Endothelial cell of umbilical vein (primary cell): ENCODE measurements at regions of chr17 and their contacts with region 1.

Region 1: GRCh38 chr17:48878918-48879898 is 13.4 kb upstream of the ATP5MC1 start:
- DNase-seq: peak; percentile 76
- H3K4me3 ChIP-seq: no peak overlapping the region
- H3K27ac ChIP-seq: no peak overlapping the region
- H3K4me1 ChIP-seq: no peaks in the 10 kb centered on the region
- H3K27me3 ChIP-seq: no peaks in the 10 kb centered on the region
- CTCF ChIP-seq: peak; percentile 87 to 89
- POLR2A ChIP-seq: no peak

Region 2: DNA sequence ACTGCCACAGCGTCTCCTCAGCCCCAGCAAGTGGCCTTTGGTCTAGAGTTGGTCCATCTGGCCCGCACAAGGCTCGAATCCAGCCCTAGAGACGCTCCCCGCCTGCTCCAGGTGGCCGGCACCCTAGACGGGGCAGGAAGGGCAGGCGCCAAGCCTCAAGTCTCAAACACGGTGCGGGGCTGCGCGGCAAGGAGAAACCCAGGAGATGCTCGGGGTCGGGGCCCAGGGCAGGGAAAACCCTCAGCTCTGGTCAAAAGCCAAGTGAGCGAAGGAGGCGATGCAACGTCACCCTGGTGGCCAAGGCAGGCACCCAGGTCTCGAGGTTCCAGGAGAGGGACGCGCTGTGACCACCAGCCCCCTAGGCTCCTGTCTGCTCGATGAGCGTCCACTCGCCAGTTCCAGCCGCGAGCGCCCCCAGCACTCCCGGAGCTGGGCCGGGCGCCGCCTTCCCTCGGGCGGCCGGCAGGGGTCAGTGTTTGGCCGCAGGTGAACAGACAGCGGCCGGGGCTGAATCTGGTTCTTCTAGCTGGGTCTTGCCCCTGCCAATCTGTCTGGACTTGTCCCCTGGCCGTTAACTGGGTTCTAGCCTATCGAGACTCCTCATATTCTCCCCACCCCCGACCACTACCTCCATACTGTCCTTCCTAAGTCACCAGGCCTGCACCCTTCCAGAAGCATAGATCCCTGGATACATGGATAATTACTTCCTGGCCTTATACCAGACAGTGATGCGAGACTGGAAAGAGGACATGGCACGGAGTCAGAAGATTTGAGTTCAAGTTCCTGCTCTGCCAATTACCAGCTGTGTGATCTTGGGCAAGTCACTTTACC is 200.9 kb before region 1 on chr17:
- CTCF ChIA-PET with region 1: interaction called, 182 read pairs
- POLR2A ChIA-PET with region 1: no interaction called
- dilution Hi-C with region 1: no loop called
- intact Hi-C with region 1: loop called (anchors 1 kb)
- DNase-seq: peak; percentile 53
- H3K4me3 ChIP-seq: no peak overlapping the region
- H3K27ac ChIP-seq: no peak overlapping the region
- H3K4me1 ChIP-seq: no peaks in the 10 kb centered on the region
- H3K27me3 ChIP-seq: peaks cover 13 to 19% of the 10 kb centered on the region in 2 experiments
- CTCF ChIP-seq: peak; percentile 95 to 100
- POLR2A ChIP-seq: no peak

Region 3: DNA sequence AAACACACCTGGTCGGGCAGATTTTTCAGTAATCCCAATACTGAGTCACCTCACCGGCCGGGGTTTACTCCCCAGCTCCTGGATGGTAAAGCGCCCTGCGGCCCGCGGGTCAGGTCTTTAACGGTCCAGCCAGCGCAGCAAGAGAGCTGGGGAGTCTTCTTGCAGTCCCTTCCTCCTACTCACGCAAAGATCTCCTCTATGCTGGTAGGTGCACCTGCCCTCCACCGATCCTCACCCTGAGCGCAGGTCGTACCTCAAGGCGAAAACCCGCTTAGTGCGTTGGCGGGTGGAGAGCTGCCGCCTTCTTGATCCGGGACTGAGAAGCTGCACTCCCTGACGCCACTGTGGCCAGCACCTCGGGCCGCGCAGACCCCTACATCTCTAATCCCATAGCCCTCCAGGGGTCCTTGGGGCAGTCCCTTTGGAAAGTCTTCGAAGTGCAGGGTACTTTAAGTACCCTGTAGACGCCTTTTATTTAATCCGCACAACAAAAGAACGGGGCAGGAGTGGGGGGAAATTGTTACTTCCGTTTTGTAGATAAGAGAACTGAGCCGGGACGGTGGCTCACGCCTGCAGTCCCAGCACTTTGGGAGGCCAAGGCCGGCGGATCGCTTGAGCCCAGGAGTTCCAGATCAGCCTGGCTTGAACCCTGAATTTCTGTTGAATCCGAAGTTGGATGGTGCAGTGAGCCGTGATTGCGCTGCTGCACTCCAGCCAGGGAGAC is 140.2 kb before region 1 on chr17:
- CTCF ChIA-PET with region 1: interaction called, 10 read pairs
- POLR2A ChIA-PET with region 1: no interaction called
- dilution Hi-C with region 1: no loop called
- intact Hi-C with region 1: no loop called
- DNase-seq: no peak
- H3K4me3 ChIP-seq: no peak overlapping the region
- H3K27ac ChIP-seq: no peak overlapping the region
- H3K4me1 ChIP-seq: no peaks in the 10 kb centered on the region
- H3K27me3 ChIP-seq: peaks cover 82 to 96% of the 10 kb centered on the region in 2 experiments
- CTCF ChIP-seq: no peak
- POLR2A ChIP-seq: no peak

Region 4: DNA sequence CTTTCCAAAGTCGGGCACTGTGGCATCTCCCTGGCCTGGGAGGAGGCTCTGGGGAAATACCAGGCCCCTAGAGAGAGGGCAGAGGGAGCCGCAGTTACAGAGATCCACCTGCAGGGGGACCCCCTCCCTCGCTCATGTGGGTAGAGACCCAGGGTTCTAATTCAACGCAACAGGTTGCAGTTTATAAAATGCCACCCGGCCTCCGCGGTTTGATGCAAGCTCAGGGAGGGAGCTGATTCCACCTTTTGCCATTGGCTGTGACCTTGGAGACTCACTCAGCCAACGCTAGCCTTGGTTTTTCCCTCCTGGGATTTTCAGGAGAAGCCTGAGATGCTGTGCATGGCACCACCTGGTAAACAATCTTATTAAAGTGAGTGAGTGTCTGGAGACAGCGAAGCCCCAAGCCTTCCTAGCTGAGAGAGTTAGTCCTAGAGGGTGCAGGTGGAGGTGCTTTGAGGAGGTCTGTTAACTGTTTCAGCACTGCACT is 74.2 kb before region 1 on chr17:
- CTCF ChIA-PET with region 1: interaction called, 1,186 read pairs
- POLR2A ChIA-PET with region 1: no interaction called
- dilution Hi-C with region 1: no loop called
- intact Hi-C with region 1: loop called (anchors 1 kb)
- DNase-seq: peak; percentile 47
- H3K4me3 ChIP-seq: no peak overlapping the region
- H3K27ac ChIP-seq: no peak overlapping the region
- H3K4me1 ChIP-seq: no peaks in the 10 kb centered on the region
- H3K27me3 ChIP-seq: peaks cover 2 to 5% of the 10 kb centered on the region in 2 experiments
- CTCF ChIP-seq: peak; percentile 87 to 94
- POLR2A ChIP-seq: no peak

Region 5: DNA sequence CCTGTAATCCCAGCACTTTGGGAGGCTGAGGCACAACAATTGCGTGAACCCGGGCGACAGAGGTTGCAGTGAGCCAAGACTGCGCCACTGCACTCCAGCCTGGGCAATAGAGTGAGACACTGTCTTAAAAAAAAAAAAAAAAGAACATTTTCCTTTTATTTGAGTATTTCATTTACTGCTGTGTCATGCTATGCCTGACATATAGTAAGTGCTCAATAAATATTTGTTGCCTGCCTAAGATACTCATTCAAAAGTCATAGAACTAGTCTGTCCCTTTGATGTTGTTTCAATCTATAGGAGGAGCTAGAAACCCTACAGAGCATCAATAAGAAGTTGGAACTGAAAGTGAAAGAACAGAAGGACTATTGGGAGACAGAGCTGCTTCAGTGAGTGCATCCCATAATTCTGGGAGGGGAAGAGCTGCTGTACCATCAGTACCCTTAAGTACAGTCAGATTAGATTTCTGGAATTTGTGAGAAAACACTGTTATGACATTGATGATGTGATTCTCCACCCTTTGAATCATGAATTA is 28.4 kb before region 1 on chr17:
- CTCF ChIA-PET with region 1: interaction called, 14 read pairs
- POLR2A ChIA-PET with region 1: no interaction called
- dilution Hi-C with region 1: no loop called
- intact Hi-C with region 1: no loop called
- DNase-seq: no peak
- H3K4me3 ChIP-seq: no peak overlapping the region
- H3K27ac ChIP-seq: no peak overlapping the region
- H3K4me1 ChIP-seq: no peaks in the 10 kb centered on the region
- H3K27me3 ChIP-seq: no peaks in the 10 kb centered on the region
- CTCF ChIP-seq: no peak
- POLR2A ChIP-seq: no peak

Region 6: DNA sequence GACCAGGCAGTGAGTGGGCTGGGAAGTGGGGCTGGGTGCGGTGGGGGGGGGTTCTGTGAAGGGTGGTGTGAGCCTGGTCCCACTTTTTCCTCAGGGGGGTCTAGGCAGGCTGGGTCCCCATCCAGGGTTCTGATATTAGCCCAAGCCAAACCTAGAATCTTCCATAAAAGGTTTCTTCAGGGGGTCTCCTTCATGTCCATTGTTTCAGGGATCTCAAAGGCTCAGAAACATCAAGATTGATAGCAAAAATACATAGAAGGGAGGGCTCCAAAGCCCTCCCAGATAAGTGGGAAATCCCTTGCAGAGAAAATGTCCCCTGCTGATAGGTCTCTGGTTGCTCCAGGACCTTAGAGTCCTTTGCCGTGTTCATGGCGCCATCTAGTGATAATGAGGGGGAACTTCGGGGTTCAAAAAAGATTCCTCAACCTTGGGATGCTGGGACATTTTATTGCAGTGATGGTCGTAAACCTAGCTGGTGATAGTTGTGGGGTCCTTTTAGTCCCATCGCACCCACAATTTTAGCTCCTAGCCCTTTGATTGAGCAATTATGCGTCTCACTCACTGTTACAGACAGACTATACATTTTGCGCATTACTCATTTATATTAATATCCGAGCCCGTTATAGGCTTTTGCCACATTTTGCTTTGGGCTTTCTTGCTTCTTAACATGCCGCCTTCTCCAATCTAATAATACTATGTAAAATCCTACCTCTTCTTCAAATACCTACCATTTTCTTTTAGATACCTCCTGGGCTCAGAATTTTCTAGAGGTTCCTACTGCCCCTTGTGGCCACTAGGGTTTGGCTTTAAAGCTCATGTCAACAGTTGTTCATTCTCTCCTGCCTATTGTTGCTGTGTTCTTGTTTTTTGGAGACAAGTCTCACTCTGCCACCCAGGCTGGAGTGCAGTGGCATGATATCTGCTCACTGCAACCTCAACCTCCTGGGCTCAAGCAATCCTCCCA is 153.0 kb after region 1 on chr17:
- CTCF ChIA-PET with region 1: interaction called, 29 read pairs
- POLR2A ChIA-PET with region 1: no interaction called
- dilution Hi-C with region 1: no loop called
- intact Hi-C with region 1: loop called (anchors 1 kb)
- DNase-seq: peak; percentile 80
- H3K4me3 ChIP-seq: no peak overlapping the region
- H3K27ac ChIP-seq: no peak overlapping the region
- H3K4me1 ChIP-seq: peaks cover 35% of the 10 kb centered on the region
- H3K27me3 ChIP-seq: no peaks in the 10 kb centered on the region
- CTCF ChIP-seq: peak; percentile 51 to 67
- POLR2A ChIP-seq: peak; percentile 53

Region 7: GRCh38 chr17:49146620-49147306 is 267.6 kb after region 1 on chr17:
- CTCF ChIA-PET with region 1: no interaction called
- POLR2A ChIA-PET with region 1: no interaction called
- dilution Hi-C with region 1: no loop called
- intact Hi-C with region 1: no loop called
- DNase-seq: peak; percentile 90
- H3K4me3 ChIP-seq: no peak overlapping the region
- H3K27ac ChIP-seq: peak overlapping the region; percentile 91
- H3K4me1 ChIP-seq: peaks cover 5% of the 10 kb centered on the region
- H3K27me3 ChIP-seq: peaks cover 0 to under 1% of the 10 kb centered on the region in 2 experiments
- CTCF ChIP-seq: no peak
- POLR2A ChIP-seq: no peak